ENCODE measurements at regions of chr22 and their contacts with region 1.

Region 1: DNA sequence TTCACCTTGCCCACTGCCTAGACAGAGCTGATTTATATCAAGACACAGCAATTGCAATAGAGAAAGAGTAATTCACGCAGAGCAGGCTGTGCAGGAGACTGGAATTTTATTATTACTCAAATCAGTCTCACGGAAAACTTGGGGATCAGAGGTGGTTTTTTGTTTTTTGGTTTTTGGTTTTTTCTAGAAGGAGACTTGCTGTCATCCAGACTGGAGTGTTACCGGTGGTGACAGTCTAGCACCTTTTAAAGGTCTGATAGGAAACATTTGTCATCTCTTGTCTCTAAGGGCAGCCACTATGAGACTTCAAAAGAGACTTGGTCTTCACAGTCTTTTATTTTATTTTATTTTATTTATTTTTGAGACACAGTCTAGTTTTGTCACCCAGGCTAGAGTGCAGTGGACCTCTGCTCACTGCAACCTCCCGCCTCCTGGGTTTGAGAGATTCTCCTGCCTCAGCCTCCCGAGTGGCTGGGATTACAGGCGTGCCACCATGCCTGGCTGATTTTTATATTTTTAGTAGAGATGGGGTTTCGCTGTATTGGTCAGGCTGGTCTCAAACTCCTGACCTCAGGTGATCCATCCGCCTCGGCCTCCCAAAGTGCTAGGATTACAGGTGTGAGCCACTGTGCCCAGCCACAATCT is 19.1 kb downstream of the APOBEC3H start:
- DNase-seq: no peak
- H3K4me3 ChIP-seq: no peak overlapping the region
- H3K27ac ChIP-seq: no peak overlapping the region
- H3K4me1 ChIP-seq: peaks cover 2 to 17% (median 7%) of the 10 kb centered on the region in 4 experiments; a peak in 4 of 7 replicates
- H3K27me3 ChIP-seq: no peaks in the 10 kb centered on the region; a peak in 1 of 7 replicates
- CTCF ChIP-seq: no peak
- EP300 ChIP-seq: no peak
- POLR2A ChIP-seq: no peak
- RAD21 ChIP-seq: no peak

Region 2: GRCh38 chr22:39097098-39098020 is 18.7 kb before region 1 on chr22 and contains the start of gene APOBEC3H:
- CTCF ChIA-PET with region 1: interaction called, 10 read pairs
- POLR2A ChIA-PET with region 1: no interaction called
- DNase-seq: no peak
- H3K4me3 ChIP-seq: no peak within 1 kb of the TSS
- H3K27ac ChIP-seq: peak within 1 kb of the TSS; percentile 39; the same call in 1 of the 2 replicates
- H3K4me1 ChIP-seq: peaks cover 0 to 24% (median 9%) of the 10 kb centered on the region in 4 experiments; a peak in 6 of 7 replicates
- H3K27me3 ChIP-seq: no peaks in the 10 kb centered on the region
- CTCF ChIP-seq: no peak
- EP300 ChIP-seq: no peak
- POLR2A ChIP-seq: no peak
- RAD21 ChIP-seq: no peak
- total RNA-seq, gene APOBEC3H: 0.47 and 0.48 TPM in 2 replicates

Measured in H1 (cell line).